A673 (cell line): ENCODE measurements at regions of chr21 and their contacts with region 1.

Region 1: DNA sequence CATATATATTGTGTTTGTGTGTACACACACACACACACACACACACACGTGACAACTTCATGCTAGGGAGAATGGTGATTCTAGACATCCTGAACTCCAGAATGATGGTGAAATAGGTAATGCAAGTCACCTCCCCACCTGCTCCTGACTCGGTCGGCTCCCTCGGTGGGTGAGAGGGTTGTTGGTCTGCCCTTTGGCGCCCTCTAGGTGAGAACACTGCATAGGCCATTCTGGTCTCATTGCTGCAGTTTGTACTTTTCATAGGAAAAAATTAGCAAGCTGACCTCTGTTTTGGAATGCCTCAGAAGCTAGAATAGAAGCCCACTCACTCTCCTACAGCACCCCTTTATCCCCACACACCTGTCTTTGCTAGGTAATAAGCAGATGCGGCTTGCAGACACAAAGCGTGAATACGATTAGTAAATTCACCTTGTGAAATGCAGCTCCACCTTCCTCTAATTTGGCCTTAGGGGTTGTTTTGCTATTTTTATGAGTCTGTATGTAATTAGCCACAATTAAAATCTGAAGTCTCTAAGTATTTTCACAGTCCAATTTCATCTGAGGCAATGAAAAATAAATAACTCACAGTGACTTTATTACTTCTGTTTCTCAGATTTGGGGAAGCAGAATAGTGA is 130.0 kb upstream of the KCNJ15 start:
- DNase-seq: peak; percentile 42
- H3K4me3 ChIP-seq: no peak overlapping the region
- H3K27ac ChIP-seq: no peak overlapping the region
- H3K4me1 ChIP-seq: no peaks in the 10 kb centered on the region
- H3K27me3 ChIP-seq: peaks cover 21% of the 10 kb centered on the region
- CTCF ChIP-seq: peak; percentile 78

Region 2: DNA sequence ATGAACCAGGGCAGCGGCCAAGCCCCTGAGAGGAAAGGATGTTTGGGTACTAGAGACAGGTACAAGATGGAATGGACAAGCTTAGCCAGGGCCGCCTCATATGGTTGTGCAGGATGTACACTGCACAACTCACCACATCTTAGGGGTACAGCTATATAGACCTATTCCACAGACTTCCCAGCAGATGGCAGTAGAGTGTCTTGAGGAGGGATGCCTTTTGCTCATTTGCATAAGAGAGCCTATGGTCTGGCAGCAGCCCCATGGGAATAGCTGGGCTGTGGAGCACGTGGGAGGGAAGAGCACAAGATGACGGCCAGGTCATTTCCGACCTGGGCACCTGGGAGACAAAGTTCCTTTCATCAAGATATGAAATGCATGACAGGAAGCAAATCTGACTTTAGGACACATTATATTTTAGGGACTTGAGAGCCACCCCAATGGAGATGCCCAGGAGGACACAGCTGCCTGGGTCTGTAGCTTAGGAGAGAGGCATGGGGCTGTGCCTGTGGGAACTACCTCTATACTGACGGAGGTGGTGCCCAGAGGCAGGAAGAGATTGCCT is 426.1 kb before region 1 on chr21:
- CTCF ChIA-PET with region 1: interaction called, 4 read pairs
- POLR2A ChIA-PET with region 1: no interaction called
- intact Hi-C with region 1: loop called (anchors 5 kb)
- DNase-seq: peak; percentile 86
- H3K4me3 ChIP-seq: no peak overlapping the region
- H3K27ac ChIP-seq: no peak overlapping the region
- H3K4me1 ChIP-seq: no peaks in the 10 kb centered on the region
- H3K27me3 ChIP-seq: peaks cover 49% of the 10 kb centered on the region
- CTCF ChIP-seq: peak; percentile 83